ENCODE measurements at regions of chr6 and their contacts with region 1.

Region 1: GRCh38 chr6:77466055-77466450 is 2.8 kb upstream of the HTR1B start:
- DNase-seq: no peak

Region 2: DNA sequence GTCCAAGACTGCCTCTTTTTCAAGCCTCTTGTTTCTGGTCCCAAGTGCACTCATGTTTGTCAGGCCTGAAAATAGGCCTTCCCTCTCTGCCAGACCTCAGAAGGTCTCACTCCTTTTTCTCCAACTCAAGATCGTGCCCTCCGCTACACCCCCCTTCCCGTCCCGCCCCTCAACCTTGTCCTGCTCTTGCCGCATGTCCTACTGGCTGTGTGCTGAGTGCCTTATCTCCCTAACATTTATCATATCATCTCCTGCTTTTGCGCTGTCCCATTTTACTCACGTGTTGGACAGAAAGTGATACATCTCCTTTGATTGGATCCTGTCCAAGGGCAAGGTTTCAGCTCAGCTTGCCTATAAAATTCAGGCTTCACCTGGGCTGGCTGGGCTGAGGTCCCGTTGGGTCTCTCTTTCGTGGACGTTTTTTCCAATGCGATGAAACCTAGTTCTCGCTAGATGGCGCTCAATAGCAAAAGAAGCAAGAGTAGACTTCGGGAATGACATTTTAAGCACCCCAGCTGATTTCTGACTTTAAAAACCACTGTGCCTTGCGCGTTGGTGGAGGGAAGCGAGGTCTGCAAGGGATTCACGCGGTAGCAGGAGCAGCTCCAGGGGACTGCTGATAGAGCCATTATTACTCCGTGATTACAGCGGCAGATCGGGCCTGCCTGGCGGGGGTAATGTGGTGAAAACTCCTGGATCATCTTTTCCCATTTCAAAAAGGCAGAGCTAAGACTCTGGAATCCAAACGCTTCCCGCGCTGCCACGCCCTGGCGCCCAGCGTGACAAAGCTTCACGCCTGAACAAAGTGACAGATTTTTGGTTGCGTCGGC is 1531.2 kb before region 1 on chr6:
- intact Hi-C with region 1: loop called in 1 of 2 experiments (anchors 10 kb)
- DNase-seq: no peak

Region 3: DNA sequence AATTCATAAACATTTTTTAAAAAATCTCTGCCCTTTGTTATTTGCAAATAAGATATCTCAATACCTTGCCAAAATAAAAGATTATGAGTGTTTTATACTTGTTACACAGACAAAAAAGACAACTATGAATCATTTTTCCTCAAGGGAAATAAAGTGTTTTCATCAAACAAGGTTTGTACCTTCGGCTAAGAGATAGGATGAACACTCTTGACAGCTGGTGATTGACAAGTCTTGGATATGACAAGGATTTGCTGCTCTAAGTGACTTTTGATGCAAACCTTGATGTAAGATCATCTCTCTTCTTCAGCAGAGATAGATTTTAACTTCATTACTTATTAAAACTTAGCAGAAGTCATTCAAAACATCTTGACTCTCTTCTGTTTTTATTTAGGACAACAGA is 887.0 kb after region 1 on chr6:
- intact Hi-C with region 1: loop called in 1 of 2 experiments (anchors 5 kb)
- DNase-seq: no peak

Measured in posterior vena cava (tissue), 2 donors.